Cardiac septum (tissue), 1 donor: ENCODE measurements at regions of chr1 and their contacts with region 1.

Region 1: DNA sequence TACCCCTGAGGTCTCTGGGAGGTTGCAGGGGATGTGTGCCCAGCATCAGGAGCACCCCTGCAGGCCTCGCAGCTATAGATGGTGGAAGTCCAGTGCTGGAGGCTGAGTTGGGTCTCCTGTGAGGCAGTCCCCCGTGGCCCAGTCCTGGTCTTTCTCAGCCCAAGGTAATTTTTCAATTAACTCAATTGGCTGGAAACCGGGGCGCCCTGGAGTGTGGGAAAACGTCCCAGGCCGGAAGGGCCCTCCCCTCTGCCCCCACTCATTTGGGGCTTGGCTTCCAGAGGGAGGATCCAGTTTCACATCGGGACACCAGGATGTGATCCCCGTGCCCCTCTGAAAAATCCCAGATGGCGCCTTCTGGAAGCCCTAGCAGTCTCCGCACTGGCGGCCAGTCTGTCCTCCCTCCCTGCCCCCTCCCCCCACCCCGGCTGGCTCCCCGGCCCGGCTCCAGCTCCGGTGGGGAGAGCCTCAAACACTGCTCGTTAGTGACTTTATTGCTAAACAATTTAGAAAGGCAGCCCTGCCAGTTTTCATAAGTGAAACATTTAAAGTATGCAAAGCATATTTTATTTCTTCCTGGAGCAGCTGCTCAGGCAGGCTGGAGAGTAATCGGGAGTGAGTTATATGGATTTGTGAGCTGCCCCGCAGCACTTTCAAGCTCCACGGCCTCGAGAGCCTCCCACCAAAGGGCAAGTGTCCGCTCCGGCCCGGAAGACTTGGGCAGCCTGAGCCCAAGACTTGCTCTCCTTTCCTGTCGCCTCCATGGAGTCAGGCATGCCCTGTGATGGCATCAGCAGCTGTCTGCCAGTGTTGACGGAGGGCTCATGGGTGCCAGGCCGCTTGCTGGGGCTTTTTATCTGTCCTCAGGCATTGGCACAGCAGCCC is 208.2 kb upstream of the TMEM51 start:
- DNase-seq: no peak

Region 2: GRCh38 chr1:14968251-14968851 is 23.0 kb after region 1 on chr1:
- intact Hi-C with region 1: loop called (anchors 2 kb)
- DNase-seq: no peak

Region 3: DNA sequence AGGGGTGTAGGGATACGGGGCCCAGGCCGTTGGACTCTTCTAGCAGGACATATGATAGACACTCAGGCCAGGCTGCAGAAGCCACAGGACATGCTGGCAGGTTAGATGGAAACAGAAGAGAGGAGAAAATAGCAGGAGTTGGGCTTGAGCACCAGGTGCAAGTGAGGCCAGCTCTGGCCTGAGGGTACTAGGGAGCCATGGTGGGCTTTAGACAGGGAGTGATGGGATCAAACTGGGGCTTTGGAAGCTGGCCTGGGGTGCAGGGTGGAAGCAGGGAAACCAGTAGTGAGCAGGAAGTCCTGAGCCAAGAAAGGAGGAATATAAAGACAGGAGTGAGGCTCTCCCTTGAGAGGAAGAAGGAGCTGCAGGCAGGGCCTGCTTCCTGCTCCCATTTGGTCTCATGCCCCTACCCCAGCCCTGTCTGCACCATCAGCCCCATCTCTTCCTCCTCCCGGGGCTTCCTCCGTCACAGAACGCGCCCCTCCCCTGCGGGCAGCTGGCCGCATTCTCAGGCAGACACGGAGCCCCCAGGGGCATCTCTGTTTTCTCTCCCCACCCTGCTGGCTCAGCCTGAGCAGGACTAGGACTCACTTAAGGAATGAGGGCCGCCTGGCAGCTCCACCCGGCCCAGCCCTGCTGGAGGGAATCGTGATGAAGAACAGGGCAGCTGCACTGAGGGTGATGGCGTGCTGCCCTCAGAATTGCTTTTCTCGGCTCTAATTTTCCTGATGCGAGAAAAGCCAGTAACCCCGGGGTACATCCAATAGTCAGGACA is 42.6 kb after region 1 on chr1:
- intact Hi-C with region 1: no loop called
- DNase-seq: no peak